Pancreas (tissue), 10 donors: ENCODE measurements at regions of chr3 and their contacts with region 1.

Region 1: GRCh38 chr3:129633751-129634392 is 27.4 kb upstream of the PLXND1 start:
- DNase-seq: no peak
- ATAC-seq: no peak
- H3K4me3 ChIP-seq: no peak overlapping the region
- H3K27ac ChIP-seq: no peak overlapping the region
- H3K4me1 ChIP-seq: no peaks in the 10 kb centered on the region
- H3K27me3 ChIP-seq: no peaks in the 10 kb centered on the region
- CTCF ChIP-seq: no peak

Region 2: GRCh38 chr3:129934234-129935123 is 300.6 kb after region 1 on chr3:
- intact Hi-C with region 1: loop called in 2 of 3 experiments (anchors 10 kb)
- DNase-seq: peak in 1 of 6 donors; percentile 29
- ATAC-seq: peak; percentile 47 to 83 (median 74)
- H3K4me3 ChIP-seq: peak overlapping the region in 1 of 4 donors; percentile 32
- H3K27ac ChIP-seq: no peak overlapping the region
- H3K4me1 ChIP-seq: no peaks in the 10 kb centered on the region
- H3K27me3 ChIP-seq: no peaks in the 10 kb centered on the region
- CTCF ChIP-seq: peak; percentile 79 to 95 (median 88)

Region 3: GRCh38 chr3:129966876-129967275 is 333.0 kb after region 1 on chr3:
- intact Hi-C with region 1: no loop called
- DNase-seq: no peak
- ATAC-seq: no peak
- H3K4me3 ChIP-seq: no peak overlapping the region
- H3K27ac ChIP-seq: no peak overlapping the region
- H3K4me1 ChIP-seq: no peaks in the 10 kb centered on the region
- H3K27me3 ChIP-seq: no peaks in the 10 kb centered on the region
- CTCF ChIP-seq: no peak